Panc1 (cell line): ENCODE measurements at regions of chr4 and their contacts with region 1.

Region 1: DNA sequence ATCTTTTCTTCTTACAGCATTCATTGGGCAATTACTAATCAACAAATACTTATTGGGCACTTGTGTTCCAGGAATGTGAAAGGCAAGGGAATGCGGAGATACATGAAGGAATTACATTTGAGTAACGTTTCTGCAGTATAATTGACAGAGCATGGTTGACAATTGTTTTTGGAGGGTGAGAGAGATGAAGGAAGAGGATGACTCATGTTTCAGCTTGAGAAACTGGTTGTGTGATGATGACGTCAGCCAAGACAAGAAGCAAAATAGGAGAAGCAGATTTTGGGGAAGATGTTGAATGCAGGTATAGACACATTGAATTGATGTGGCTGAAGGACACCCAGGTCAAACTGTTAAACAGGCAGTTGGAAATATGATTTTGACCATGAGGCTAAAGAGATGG is 8.0 kb upstream of the CPEB2 start:
- DNase-seq: no peak
- ATAC-seq: no peak
- H3K4me3 ChIP-seq: no peak overlapping the region
- H3K27ac ChIP-seq: no peak overlapping the region
- H3K4me1 ChIP-seq: no peaks in the 10 kb centered on the region
- H3K27me3 ChIP-seq: no peaks in the 10 kb centered on the region
- CTCF ChIP-seq: no peak

Region 2: GRCh38 chr4:14856076-14856933 is 137.9 kb before region 1 on chr4:
- CTCF ChIA-PET with region 1: no interaction called
- POLR2A ChIA-PET with region 1: no interaction called
- in situ Hi-C with region 1: loop called (anchors 25 kb)
- intact Hi-C with region 1: no loop called
- DNase-seq: peak; percentile 55
- ATAC-seq: peak; percentile 87
- H3K4me3 ChIP-seq: no peak overlapping the region
- H3K27ac ChIP-seq: no peak overlapping the region
- H3K4me1 ChIP-seq: no peaks in the 10 kb centered on the region
- H3K27me3 ChIP-seq: no peaks in the 10 kb centered on the region
- CTCF ChIP-seq: no peak

Region 3: DNA sequence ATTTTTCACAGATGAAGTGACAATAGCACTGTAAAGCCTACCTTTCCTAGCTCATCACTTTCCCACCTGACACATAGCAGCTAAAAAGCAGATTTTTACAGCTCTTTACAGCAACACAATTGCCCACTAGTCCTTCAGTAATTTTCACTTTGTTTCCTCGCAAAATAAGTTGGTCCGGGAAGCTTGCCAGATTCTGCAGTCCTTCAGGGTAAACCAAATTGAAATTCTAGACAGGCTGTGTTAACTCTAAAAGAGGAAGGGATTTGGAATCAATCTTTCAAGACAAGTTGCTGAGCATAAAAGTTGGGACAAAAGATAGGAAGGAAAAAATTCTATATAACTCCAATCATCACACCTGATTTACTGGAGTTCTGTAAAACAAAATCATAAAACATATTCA is 442.3 kb after region 1 on chr4:
- CTCF ChIA-PET with region 1: no interaction called
- POLR2A ChIA-PET with region 1: no interaction called
- in situ Hi-C with region 1: no loop called
- intact Hi-C with region 1: no loop called
- DNase-seq: no peak
- ATAC-seq: no peak
- H3K4me3 ChIP-seq: no peak overlapping the region
- H3K27ac ChIP-seq: no peak overlapping the region
- H3K4me1 ChIP-seq: no peaks in the 10 kb centered on the region
- H3K27me3 ChIP-seq: no peaks in the 10 kb centered on the region
- CTCF ChIP-seq: no peak